Activated naive CD8-positive, alpha-beta T cell treated with anti-CD3 and anti-CD28 coated beads, Interleukin-2, amount 10 ng/mL, durations not matched to agents 7 days and 5 days (primary cell): ENCODE measurements at regions of chr1 and their contacts with region 1.

Region 1: DNA sequence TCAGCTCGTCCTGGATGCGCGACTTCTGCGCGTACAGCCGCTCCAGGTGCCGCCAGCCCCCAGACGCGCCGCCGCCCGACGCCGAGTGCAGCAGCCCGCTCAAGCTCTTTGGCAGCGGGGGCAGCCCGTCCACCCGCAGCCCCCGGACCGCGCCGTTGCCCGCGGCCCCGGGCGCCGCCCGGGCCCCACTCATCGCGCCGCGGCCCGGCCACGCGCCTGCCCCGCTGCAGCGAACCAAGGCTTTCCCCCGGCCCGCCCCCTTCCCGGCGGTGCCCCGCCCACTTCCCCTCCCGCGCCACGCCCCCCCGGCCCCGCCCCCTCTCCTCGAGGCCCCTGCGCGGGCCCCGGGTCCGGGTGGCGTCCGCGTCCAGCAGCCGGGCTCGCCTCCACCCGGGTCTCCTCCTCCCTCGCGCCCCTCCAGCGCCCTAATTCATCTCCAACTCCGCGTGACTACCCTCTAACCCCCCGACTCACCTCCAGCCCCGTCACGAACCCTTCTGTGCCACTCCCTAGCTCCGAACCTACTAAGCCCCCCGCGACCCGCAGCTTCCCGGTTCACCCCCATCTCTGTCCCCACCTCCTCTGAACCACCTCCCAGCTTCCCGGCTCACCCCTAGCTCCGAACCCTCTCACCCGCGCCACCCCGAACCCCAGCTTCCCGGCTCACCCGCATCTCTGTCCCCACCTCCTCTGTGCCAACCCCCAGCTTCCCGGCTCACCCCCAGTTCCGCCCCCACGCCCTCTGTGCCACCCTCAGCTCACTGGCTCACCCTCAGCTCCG is at the start of gene FAM89A:
- DNase-seq: peak; percentile 82
- ATAC-seq: peak; percentile 71
- H3K4me3 Mint-ChIP-seq: peak within 1 kb of the TSS; percentile 83
- H3K27ac Mint-ChIP-seq: peak within 1 kb of the TSS; percentile 47
- H3K4me1 Mint-ChIP-seq: peaks cover 20% of the 10 kb centered on the region
- H3K27me3 Mint-ChIP-seq: peaks cover 20% of the 10 kb centered on the region
- total RNA-seq, gene FAM89A: 6.7 to 7.6 TPM

Region 2: GRCh38 chr1:231053493-231054162 is 13.4 kb after region 1 on chr1:
- POLR2A ChIA-PET with region 1: interaction called, 14 read pairs
- DNase-seq: no peak
- ATAC-seq: peak; percentile 69
- H3K4me3 Mint-ChIP-seq: peak overlapping the region; percentile 76
- H3K27ac Mint-ChIP-seq: peak overlapping the region; percentile 84
- H3K4me1 Mint-ChIP-seq: peaks cover 15% of the 10 kb centered on the region
- H3K27me3 Mint-ChIP-seq: no peaks in the 10 kb centered on the region